Right cardiac atrium (tissue), 5 donors: ENCODE measurements at regions of chr12 and their contacts with region 1.

Region 1: DNA sequence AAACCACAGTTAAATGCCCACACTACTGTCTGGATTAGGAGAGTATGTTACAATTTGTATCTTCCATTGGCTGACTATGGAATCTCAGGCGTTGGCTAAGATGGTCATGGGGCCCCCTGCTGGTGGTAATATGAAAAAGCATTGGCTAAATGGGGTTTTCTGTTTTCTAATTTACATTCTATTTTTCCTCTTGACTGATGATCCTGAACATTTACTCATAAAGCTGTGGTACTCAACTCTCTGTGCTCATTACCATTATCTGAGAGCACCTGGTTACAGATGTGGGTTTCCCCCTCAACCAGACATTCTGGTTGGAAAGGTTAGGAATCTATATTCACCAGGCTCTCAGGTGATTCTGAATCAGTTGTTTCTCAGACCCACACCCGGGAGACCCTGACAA is 64.8 kb downstream of the WSCD2 start:
- DNase-seq: no peak
- ATAC-seq: peak in 1 of 2 donors; percentile 26
- H3K4me3 ChIP-seq: no peak overlapping the region
- H3K27ac ChIP-seq: no peak overlapping the region
- H3K4me1 ChIP-seq: no peaks in the 10 kb centered on the region
- H3K27me3 ChIP-seq: no peaks in the 10 kb centered on the region

Region 2: GRCh38 chr12:107917912-107918800 is 275.8 kb before region 1 on chr12:
- intact Hi-C with region 1: loop called in 1 of 4 experiments (anchors 5 kb)
- DNase-seq: no peak
- ATAC-seq: peak in 1 of 2 donors; percentile 22
- H3K4me3 ChIP-seq: no peak overlapping the region
- H3K27ac ChIP-seq: no peak overlapping the region
- H3K4me1 ChIP-seq: no peaks in the 10 kb centered on the region
- H3K27me3 ChIP-seq: no peaks in the 10 kb centered on the region

Region 3: GRCh38 chr12:107983756-107984472 is 210.0 kb before region 1 on chr12:
- intact Hi-C with region 1: loop called in 1 of 4 experiments (anchors 10 kb)
- DNase-seq: no peak
- ATAC-seq: no peak
- H3K4me3 ChIP-seq: no peak overlapping the region
- H3K27ac ChIP-seq: no peak overlapping the region
- H3K4me1 ChIP-seq: no peaks in the 10 kb centered on the region
- H3K27me3 ChIP-seq: no peaks in the 10 kb centered on the region

Region 4: GRCh38 chr12:107992870-107993451 is 201.0 kb before region 1 on chr12:
- intact Hi-C with region 1: loop called in 2 of 4 experiments (anchors 10 kb)
- DNase-seq: no peak
- ATAC-seq: no peak
- H3K4me3 ChIP-seq: no peak overlapping the region
- H3K27ac ChIP-seq: no peak overlapping the region
- H3K4me1 ChIP-seq: no peaks in the 10 kb centered on the region
- H3K27me3 ChIP-seq: no peaks in the 10 kb centered on the region

Region 5: GRCh38 chr12:108099073-108099472 is 94.8 kb before region 1 on chr12:
- intact Hi-C with region 1: loop called in 1 of 4 experiments (anchors 10 kb)
- DNase-seq: no peak
- ATAC-seq: no peak
- H3K4me3 ChIP-seq: no peak overlapping the region
- H3K27ac ChIP-seq: no peak overlapping the region
- H3K4me1 ChIP-seq: no peaks in the 10 kb centered on the region
- H3K27me3 ChIP-seq: no peaks in the 10 kb centered on the region

Region 6: GRCh38 chr12:108119126-108119976 is 74.6 kb before region 1 on chr12:
- intact Hi-C with region 1: loop called in 1 of 4 experiments (anchors 5 kb)
- DNase-seq: peak in 1 of 3 donors; percentile 28
- ATAC-seq: peak; percentile 72 to 95
- H3K4me3 ChIP-seq: no peak overlapping the region
- H3K27ac ChIP-seq: no peak overlapping the region
- H3K4me1 ChIP-seq: no peaks in the 10 kb centered on the region
- H3K27me3 ChIP-seq: no peaks in the 10 kb centered on the region